ENCODE measurements at regions of chr9 and their contacts with region 1.

Region 1: DNA sequence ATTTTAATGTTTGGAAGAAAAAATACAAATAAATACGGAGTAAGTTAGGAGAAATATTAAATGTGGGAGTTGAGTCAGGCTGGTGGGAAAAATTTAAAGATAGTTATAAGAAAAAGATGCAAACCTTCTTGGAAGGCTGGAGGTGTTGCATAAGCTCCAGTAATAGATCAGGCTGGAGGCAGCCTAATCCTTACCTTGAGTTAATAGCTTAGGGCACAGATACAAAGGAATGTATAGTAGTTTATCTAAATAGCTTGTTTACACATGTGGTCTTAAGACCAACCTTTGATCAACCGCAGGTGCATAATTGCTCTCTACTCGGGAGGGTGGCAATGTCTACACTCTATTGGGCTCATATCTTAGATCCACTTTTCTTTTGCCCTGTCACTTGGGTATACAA is 2.7 kb upstream of the INSL4 start:
- DNase-seq: no peak
- H3K4me3 Mint-ChIP-seq: no peak overlapping the region
- H3K27ac Mint-ChIP-seq: no peak overlapping the region
- H3K4me1 Mint-ChIP-seq: no peaks in the 10 kb centered on the region
- H3K27me3 Mint-ChIP-seq: peaks cover 4% of the 10 kb centered on the region

Region 2: DNA sequence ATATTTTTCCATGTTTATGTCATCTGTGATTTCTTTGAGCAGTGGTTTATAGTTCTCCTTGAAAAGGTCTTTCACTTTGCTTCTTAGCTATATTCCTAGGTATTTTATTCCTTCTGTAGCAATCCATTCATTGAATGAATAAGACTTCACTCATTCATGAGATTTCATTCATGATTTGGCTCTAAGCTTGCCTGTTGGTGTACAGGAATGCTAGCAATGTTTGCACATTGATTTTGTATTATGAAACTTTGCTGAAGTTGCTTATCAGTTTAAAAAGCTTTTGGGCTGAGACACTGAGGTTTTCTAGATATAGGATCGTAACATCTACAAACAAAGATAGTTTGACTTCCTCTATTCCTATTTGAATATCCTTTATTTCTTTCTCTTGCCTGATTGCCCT is 60.0 kb after region 1 on chr9:
- CTCF ChIA-PET with region 1: no interaction called
- POLR2A ChIA-PET with region 1: no interaction called
- intact Hi-C with region 1: loop called (anchors 10 kb)
- DNase-seq: no peak
- H3K4me3 Mint-ChIP-seq: no peak overlapping the region
- H3K27ac Mint-ChIP-seq: no peak overlapping the region
- H3K4me1 Mint-ChIP-seq: peaks cover 3% of the 10 kb centered on the region
- H3K27me3 Mint-ChIP-seq: peaks cover 3% of the 10 kb centered on the region

Region 3: DNA sequence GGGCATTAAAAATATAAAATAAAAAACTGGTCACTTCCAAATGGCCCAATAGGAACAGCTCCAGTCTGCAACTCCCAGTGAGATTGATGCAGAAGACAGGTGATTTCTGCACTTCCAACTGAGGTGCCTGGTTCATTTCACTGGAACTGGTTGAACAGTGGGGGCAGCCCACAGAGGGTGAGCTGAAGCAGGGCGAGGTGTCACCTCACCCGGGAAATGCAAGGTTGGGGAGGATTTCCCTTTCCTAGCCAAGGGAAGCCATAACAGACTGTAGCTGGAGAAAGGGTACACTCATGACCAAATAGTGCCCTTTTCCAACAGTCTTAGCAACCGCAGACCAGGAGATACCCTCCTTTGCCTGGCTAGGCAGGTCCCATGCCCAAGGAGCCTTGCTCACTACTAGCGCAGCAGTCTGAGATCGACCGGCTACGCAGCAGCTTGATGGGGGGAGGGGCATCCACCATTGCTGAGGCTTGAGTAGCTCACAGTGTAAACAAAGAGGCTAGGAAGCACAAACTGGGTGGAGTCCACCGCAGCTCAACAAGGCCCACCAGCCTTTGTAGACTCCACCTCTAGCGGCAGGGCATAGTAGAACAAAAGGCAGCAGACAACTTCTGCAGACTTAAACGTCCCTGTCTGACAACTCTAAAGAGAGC is 98.5 kb after region 1 on chr9:
- CTCF ChIA-PET with region 1: no interaction called
- POLR2A ChIA-PET with region 1: no interaction called
- intact Hi-C with region 1: no loop called
- DNase-seq: peak; percentile 60
- H3K4me3 Mint-ChIP-seq: peak overlapping the region; percentile 23
- H3K27ac Mint-ChIP-seq: no peak overlapping the region
- H3K4me1 Mint-ChIP-seq: peaks cover 30% of the 10 kb centered on the region
- H3K27me3 Mint-ChIP-seq: no peaks in the 10 kb centered on the region